Adrenal gland (tissue), 19 donors: ENCODE measurements at regions of chr3 and their contacts with region 1.

Region 1: GRCh38 chr3:132399054-132399929 is 18.0 kb upstream of the DNAJC13 start:
- DNase-seq: peak in 5 of 7 donors; percentile 18 to 62 (median 54)
- H3K4me3 ChIP-seq: no peak overlapping the region
- H3K27ac ChIP-seq: no peak overlapping the region
- H3K4me1 ChIP-seq: peaks cover 0 to 4% of the 10 kb centered on the region in 2 donors
- H3K27me3 ChIP-seq: no peaks in the 10 kb centered on the region
- CTCF ChIP-seq: peak; percentile 66 to 89 (median 82)
- POLR2A ChIP-seq: no peak

Region 2: GRCh38 chr3:132245552-132246142 is 153.6 kb before region 1 on chr3:
- intact Hi-C with region 1: loop called in 1 of 2 experiments (anchors 5 kb)
- DNase-seq: no peak
- H3K4me3 ChIP-seq: no peak overlapping the region
- H3K27ac ChIP-seq: no peak overlapping the region
- H3K4me1 ChIP-seq: no peaks in the 10 kb centered on the region
- H3K27me3 ChIP-seq: peaks cover 7% of the 10 kb centered on the region
- CTCF ChIP-seq: no peak
- POLR2A ChIP-seq: no peak

Region 3: DNA sequence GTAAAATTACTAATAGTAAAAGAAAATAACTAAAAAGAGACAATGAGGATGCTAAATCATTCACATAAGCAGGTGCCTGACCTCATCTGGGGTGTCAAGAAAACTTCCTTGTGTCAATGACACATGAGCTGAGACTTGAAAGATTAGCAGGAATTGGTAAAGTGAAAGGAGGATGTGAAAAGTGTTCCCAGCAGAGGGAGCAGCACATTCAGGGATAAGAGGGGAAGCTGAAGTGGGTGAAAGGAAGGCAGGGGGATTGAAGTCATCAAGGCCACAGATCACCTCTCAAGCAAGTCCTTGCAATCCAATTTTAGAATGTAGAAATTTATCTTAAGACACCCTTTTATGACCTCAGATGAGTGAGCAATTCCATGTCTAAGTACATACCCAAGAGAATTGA is 142.3 kb before region 1 on chr3:
- intact Hi-C with region 1: loop called in 1 of 2 experiments (anchors 2 kb)
- DNase-seq: peak; percentile 14 to 52 (median 31)
- H3K4me3 ChIP-seq: no peak overlapping the region
- H3K27ac ChIP-seq: no peak overlapping the region
- H3K4me1 ChIP-seq: no peaks in the 10 kb centered on the region
- H3K27me3 ChIP-seq: no peaks in the 10 kb centered on the region
- CTCF ChIP-seq: peak; percentile 31 to 68 (median 58)
- POLR2A ChIP-seq: no peak

Region 4: DNA sequence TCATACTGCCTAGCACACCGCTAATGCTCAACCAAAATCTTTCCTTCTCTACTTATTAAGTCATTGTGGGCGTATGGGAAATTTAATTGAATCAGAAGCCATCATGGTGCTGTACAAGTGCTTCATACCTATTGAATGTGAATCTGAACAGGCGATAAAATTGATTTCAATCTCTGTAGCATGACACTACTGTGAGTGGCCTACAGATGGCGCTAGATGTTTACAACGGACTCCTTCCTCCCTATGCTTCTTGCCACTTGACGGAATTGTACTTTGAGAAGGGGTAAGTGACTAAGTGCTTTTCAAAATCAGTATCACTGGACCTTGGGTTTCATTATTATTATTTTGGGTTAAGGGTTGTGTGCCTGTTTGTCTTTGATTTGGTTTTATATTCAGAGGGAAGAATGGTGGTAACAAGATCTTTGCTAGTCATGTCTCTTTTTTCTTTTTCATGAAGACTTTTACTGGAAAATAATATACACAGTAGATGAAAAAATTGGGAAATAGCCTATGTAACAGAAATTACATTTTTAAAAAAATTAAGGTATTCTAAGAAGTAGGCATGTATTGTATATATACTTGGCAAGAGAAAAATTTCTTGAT is 46.6 kb before region 1 on chr3:
- intact Hi-C with region 1: loop called (anchors 2 to 5 kb)
- DNase-seq: peak; percentile 52 to 89 (median 74)
- H3K4me3 ChIP-seq: no peak overlapping the region
- H3K27ac ChIP-seq: no peak overlapping the region
- H3K4me1 ChIP-seq: no peaks in the 10 kb centered on the region
- H3K27me3 ChIP-seq: no peaks in the 10 kb centered on the region
- CTCF ChIP-seq: peak; percentile 83 to 94 (median 86)
- POLR2A ChIP-seq: no peak